ENCODE measurements at regions of chr4 and their contacts with region 1.

Region 1: GRCh38 chr4:76213415-76214176 is at the start of gene SCARB2:
- DNase-seq: peak; percentile 81 to 88 (median 86)
- ATAC-seq: peak; percentile 95
- H3K4me3 ChIP-seq: peak within 1 kb of the TSS; percentile 63
- H3K27ac ChIP-seq: peak within 1 kb of the TSS; percentile 76
- H3K4me1 ChIP-seq: peaks cover 15 to 27% of the 10 kb centered on the region in 2 experiments
- H3K27me3 ChIP-seq: no peaks in the 10 kb centered on the region
- CTCF ChIP-seq: no peak
- EP300 ChIP-seq: 0 out of 2 replicates have a peak, but pooled peaks have one; percentile 3
- POLR2A ChIP-seq: peak; percentile 64; the same call in 1 of the 2 replicates
- RAD21 ChIP-seq: no peak
- polyA plus RNA-seq, gene SCARB2: 6.1 to 8.8 TPM

Region 2: DNA sequence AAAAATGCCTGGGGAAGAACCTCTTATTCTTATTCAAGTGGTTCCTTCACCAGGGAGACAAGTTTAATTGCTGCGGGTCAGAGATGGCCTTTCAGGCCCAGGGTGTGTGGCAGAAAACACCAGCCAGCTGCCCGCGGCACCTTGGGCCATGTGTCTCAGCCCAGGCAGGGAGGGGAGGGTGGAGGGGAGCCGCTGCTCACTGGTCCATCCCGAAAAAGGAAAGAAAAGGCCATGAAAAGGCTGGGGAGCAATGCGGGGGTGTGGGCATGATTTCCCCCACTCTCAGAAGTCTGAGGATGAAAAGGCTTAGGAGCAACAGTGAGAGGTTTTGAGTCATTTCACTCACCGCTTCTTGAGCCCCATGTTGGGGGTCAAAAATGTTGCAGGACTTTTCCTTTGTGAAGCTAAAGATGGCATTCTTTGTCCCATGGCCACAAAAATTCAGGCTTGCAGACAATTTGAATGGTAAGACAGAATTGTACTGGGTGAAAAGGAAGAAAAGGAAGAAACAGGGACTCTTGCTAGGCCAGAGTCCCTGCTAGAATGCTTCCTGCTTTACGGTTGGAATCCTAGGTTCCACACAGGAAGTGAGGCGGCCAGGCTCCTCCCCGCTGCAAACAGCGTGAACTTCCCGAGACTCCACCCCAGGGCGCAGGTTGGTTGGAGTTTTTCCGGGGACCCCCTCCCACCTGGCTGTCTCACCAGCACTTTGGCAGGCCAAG is 20.5 kb after region 1 on chr4:
- CTCF ChIA-PET with region 1: no interaction called
- POLR2A ChIA-PET with region 1: interaction called, 4 read pairs
- in situ Hi-C with region 1: no loop called
- intact Hi-C with region 1: loop called (anchors 2 kb)
- DNase-seq: peak; percentile 56 to 89 (median 62)
- ATAC-seq: peak; percentile 98
- H3K4me3 ChIP-seq: peak overlapping the region; percentile 61
- H3K27ac ChIP-seq: peak overlapping the region; percentile 86
- H3K4me1 ChIP-seq: peaks cover 0 to 3% of the 10 kb centered on the region in 2 experiments; a peak in 1 of 5 replicates
- H3K27me3 ChIP-seq: no peaks in the 10 kb centered on the region
- CTCF ChIP-seq: no peak
- EP300 ChIP-seq: no peak
- POLR2A ChIP-seq: peak; percentile 92
- RAD21 ChIP-seq: no peak

Region 3: GRCh38 chr4:76354517-76355473 is 141.2 kb after region 1 on chr4:
- CTCF ChIA-PET with region 1: no interaction called
- POLR2A ChIA-PET with region 1: no interaction called
- in situ Hi-C with region 1: no loop called
- intact Hi-C with region 1: no loop called
- DNase-seq: no peak
- ATAC-seq: no peak
- H3K4me3 ChIP-seq: no peak overlapping the region
- H3K27ac ChIP-seq: no peak overlapping the region
- H3K4me1 ChIP-seq: no peaks in the 10 kb centered on the region
- H3K27me3 ChIP-seq: no peaks in the 10 kb centered on the region
- CTCF ChIP-seq: no peak
- EP300 ChIP-seq: no peak
- POLR2A ChIP-seq: no peak
- RAD21 ChIP-seq: no peak

Region 4: GRCh38 chr4:76430519-76431388 is 217.2 kb after region 1 on chr4:
- CTCF ChIA-PET with region 1: no interaction called
- POLR2A ChIA-PET with region 1: no interaction called
- in situ Hi-C with region 1: no loop called
- intact Hi-C with region 1: no loop called
- DNase-seq: peak in 2 of 4 experiments; percentile 42 to 55
- ATAC-seq: peak; percentile 74
- H3K4me3 ChIP-seq: no peak overlapping the region
- H3K27ac ChIP-seq: no peak overlapping the region
- H3K4me1 ChIP-seq: no peaks in the 10 kb centered on the region
- H3K27me3 ChIP-seq: peaks cover 1 to 5% of the 10 kb centered on the region in 2 experiments; a peak in 3 of 5 replicates
- CTCF ChIP-seq: peak; percentile 44 to 81 (median 50); a peak in 4 of 6 replicates
- EP300 ChIP-seq: no peak
- POLR2A ChIP-seq: no peak
- RAD21 ChIP-seq: peak; percentile 58 to 76

Measured in K562 (cell line).